OCI-LY7 (cell line): ENCODE measurements at regions of chr1 and their contacts with region 1.

Region 1: GRCh38 chr1:107877092-107877491 is 87.9 kb downstream of the VAV3 start:
- DNase-seq: no peak
- H3K4me3 ChIP-seq: peak overlapping the region; percentile 38
- H3K27ac ChIP-seq: no peak overlapping the region
- H3K4me1 ChIP-seq: peaks cover 47% of the 10 kb centered on the region
- CTCF ChIP-seq: no peak

Region 2: DNA sequence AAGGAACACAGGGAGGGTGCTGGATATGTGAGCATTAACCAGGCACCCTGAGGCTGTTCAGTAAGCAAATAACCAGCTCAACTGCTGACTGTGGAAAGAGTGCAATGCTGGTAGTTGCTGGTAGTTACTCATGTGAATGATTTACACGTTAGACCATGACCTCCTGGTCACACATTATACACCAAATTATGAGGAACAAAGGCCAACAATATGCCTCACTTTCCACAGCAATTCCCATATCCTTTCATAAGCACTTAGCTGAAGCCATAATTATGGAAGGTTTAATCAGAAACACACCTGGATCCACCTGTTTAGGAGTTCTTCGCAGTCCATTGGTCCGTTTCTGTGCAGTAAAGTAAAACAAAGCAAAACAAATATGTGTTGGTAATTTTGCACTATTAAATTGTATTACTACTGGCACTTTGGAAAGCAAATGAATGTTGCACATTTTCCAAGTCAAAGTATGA is 193.9 kb before region 1 on chr1:
- CTCF ChIA-PET with region 1: no interaction called
- POLR2A ChIA-PET with region 1: no interaction called
- intact Hi-C with region 1: no loop called
- DNase-seq: no peak
- H3K4me3 ChIP-seq: no peak overlapping the region
- H3K27ac ChIP-seq: no peak overlapping the region
- H3K4me1 ChIP-seq: peaks cover 8% of the 10 kb centered on the region
- CTCF ChIP-seq: no peak

Region 3: GRCh38 chr1:107840725-107841124 is 36.4 kb before region 1 on chr1:
- CTCF ChIA-PET with region 1: interaction called, 3 read pairs
- POLR2A ChIA-PET with region 1: interaction called, 7 read pairs
- intact Hi-C with region 1: loop called (anchors 5 kb)
- DNase-seq: peak; percentile 41
- H3K4me3 ChIP-seq: no peak overlapping the region
- H3K27ac ChIP-seq: no peak overlapping the region
- H3K4me1 ChIP-seq: peaks cover 49% of the 10 kb centered on the region
- CTCF ChIP-seq: no peak